Left ventricle myocardium superior (tissue), 1 donor: ENCODE measurements at regions of chr2 and their contacts with region 1.

Region 1: DNA sequence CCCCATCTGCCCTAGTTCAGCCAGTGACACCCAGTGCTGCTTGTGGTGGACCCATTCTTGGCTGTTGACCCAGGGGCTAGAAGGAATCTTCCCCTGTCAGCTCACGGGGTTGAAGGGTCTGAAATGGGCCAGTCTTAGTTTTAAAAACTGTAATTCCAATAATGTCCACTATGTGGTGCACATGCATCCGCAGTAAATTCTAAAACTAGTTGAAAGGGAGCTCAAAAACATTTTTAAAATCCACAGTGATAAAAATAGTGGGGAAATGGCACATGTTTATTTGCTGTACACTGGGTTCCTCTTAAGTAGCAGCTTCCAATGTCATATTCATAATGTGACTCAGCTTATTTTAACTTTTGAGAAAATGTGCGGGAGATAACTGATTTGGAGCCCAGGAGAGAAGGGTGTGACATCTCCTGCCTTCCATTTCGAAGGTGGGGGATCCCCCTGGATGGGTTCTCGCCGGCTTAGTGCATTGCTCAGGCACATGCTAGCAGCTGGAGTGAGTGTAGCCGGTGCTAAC is 32.8 kb downstream of the GRHL1 start:
- DNase-seq: no peak
- ATAC-seq: peak; percentile 69

Region 2: DNA sequence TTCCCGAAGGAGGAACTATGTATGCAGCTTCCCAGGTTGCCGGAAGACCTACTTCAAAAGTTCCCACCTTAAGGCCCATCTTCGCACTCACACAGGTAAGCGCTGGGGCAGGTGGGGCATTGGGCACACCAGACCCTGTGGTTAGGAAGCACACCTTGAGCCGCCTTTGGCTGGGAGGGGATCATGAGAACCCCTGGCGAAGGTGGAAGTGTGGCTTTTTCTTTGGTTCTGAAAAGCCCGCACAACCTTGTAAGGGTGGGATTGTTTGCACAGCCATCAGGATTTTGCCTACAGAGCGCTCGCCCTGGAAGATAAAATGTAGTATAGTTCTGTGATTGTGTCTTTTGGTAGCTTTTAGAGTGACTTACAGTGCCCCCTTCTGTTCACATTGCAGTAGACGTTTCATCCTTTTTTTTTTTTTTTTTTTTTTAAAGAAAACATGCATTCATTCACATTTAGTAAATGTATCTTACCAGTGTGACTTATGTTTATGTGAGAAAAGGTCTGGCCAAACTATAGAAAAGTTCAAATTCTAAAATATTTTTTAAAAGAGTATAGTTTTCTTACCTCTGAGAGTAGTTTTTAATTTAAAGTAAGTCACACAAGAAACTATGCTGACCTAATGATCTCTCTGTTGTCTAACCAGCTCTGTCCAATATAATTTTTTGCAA is 64.4 kb after region 1 on chr2:
- intact Hi-C with region 1: loop called (anchors 5 kb)
- DNase-seq: no peak
- ATAC-seq: no peak